ENCODE measurements at regions of chr7 and their contacts with region 1.

Region 1: DNA sequence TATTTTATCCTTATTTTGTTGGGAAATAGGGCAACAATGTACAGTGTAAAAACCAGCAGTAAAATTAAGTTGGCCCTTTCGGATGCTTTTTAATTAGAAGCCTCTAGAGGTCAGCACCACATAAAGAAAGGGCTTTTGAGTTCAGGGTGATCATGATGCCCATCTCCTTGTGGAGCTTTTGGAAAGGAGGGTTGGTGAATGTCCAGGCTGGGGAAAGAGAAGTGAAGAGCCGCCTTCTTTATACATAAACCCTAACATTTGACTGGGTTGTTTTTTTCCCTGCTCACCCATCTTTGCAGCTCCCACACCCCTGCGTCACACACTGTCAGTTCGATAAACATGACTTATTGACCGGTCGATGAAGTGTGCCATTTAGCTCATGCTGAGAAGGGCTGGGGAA is 29.8 kb downstream of the MTURN start:
- DNase-seq: peak; percentile 55 to 57
- ATAC-seq: peak; percentile 54 to 84; a peak in 5 of 6 replicates
- H3K4me3 ChIP-seq: no peak overlapping the region
- H3K27ac ChIP-seq: no peak overlapping the region
- H3K4me1 ChIP-seq: peaks cover 28% of the 10 kb centered on the region
- CTCF ChIP-seq: peak; percentile 84
- EP300 ChIP-seq: no peak
- POLR2A ChIP-seq: no peak
- RAD21 ChIP-seq: peak; percentile 84

Region 2: DNA sequence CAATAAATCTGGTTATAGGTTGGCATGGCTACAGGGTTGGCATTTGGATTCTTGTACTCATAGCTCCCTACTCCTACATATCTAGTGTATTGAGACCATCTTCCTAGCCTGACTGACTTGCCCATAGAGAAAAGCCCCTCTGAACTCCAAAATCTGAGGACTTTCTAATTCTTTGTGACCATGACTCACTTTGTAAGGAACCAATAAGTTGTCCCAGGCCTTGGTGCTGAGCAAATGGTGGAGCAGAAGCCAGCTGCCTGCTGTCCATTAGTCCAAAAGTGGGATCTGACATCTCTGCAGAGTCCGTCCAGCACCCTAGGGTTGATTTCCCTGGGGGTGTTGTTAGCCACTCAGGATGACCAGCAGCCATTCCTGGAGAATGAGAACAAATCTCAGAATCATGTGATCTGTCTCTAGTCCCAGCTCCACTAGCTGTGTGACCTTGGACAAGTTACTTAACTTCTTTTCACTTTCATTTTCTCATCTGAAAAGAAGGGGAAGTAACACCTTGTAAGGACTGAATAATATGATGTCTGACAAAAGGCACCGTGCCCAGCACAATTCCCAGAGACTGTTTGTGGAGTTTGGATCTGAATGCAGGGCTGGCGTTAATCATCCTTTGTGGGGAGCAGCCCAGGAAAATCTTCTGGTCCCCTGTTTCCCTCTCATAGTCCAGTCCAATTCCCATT is 14.3 kb after region 1 on chr7:
- CTCF ChIA-PET with region 1: interaction called, 30 read pairs
- POLR2A ChIA-PET with region 1: no interaction called
- DNase-seq: no peak
- ATAC-seq: no peak
- H3K4me3 ChIP-seq: no peak overlapping the region
- H3K27ac ChIP-seq: no peak overlapping the region
- H3K4me1 ChIP-seq: no peaks in the 10 kb centered on the region
- CTCF ChIP-seq: no peak
- EP300 ChIP-seq: no peak
- POLR2A ChIP-seq: no peak
- RAD21 ChIP-seq: no peak

Region 3: GRCh38 chr7:30226614-30227268 is 62.2 kb after region 1 on chr7:
- CTCF ChIA-PET with region 1: interaction called, 11 read pairs
- POLR2A ChIA-PET with region 1: no interaction called
- DNase-seq: peak; percentile 58 to 69
- ATAC-seq: peak; percentile 86 to 95
- H3K4me3 ChIP-seq: no peak overlapping the region
- H3K27ac ChIP-seq: no peak overlapping the region
- H3K4me1 ChIP-seq: peaks cover 9% of the 10 kb centered on the region; the same call in 1 of the 3 replicates
- CTCF ChIP-seq: peak; percentile 46
- EP300 ChIP-seq: no peak
- POLR2A ChIP-seq: no peak
- RAD21 ChIP-seq: peak; percentile 46 to 61; a peak in 4 of 5 replicates

Region 4: DNA sequence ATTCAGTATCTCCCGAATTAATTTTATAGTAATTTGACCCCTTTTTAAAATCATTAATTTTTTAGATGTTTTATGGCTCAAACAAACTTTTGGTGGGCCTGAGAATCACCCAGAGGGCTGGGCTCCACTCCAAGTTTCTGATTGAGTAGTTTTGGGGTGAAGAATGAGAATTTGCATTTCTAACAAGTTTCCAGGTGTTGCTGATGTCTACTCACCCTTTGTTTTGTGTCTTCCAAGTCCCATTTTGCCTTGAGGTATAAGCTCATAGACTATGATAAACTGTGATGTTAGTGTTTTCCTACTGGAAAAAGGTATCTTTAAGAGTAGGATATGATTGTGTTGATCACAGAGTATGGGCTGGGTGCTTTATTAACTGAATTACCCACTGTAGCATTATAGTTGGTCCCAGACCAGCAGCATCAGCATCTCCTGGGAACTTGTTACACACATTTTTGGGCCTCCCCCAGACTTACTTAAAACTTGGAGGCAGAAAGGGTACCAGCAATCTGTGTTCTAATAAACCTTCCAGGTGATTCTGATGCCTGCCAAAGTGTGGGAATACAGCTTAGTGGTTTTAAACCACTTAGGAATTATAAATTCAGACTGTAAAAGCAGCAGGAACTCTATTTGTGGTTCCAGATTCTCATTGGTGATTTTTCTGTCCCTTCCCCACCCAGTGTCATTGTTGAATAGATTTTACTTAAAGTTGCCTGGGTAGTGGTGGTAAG is 138.9 kb after region 1 on chr7:
- CTCF ChIA-PET with region 1: no interaction called
- POLR2A ChIA-PET with region 1: no interaction called
- DNase-seq: no peak
- ATAC-seq: no peak
- H3K4me3 ChIP-seq: no peak overlapping the region
- H3K27ac ChIP-seq: no peak overlapping the region
- H3K4me1 ChIP-seq: peaks cover 36% of the 10 kb centered on the region; the same call in 2 of the 3 replicates
- CTCF ChIP-seq: no peak
- EP300 ChIP-seq: no peak
- POLR2A ChIP-seq: no peak
- RAD21 ChIP-seq: no peak

Region 5: GRCh38 chr7:30412810-30413504 is 248.4 kb after region 1 on chr7:
- CTCF ChIA-PET with region 1: interaction called, 10 read pairs
- POLR2A ChIA-PET with region 1: no interaction called
- DNase-seq: peak; percentile 66 to 85
- ATAC-seq: peak; percentile 97
- H3K4me3 ChIP-seq: no peak overlapping the region
- H3K27ac ChIP-seq: no peak overlapping the region
- H3K4me1 ChIP-seq: no peaks in the 10 kb centered on the region
- CTCF ChIP-seq: peak; percentile 75
- EP300 ChIP-seq: no peak
- POLR2A ChIP-seq: no peak
- RAD21 ChIP-seq: peak; percentile 85 to 88

Measured in A549 (cell line).